ENCODE measurements at regions of chr2 and their contacts with region 1.

Region 1: GRCh38 chr2:220143336-220143735 is 515.9 kb downstream of the SLC4A3 start:
- DNase-seq: peak; percentile 37
- ATAC-seq: peak; percentile 38; the same call in 2 of the 3 replicates
- H3K4me3 ChIP-seq: no peak overlapping the region
- H3K27ac ChIP-seq: no peak overlapping the region
- H3K4me1 ChIP-seq: no peaks in the 10 kb centered on the region
- H3K27me3 ChIP-seq: no peaks in the 10 kb centered on the region; a peak in 1 of 5 replicates
- CTCF ChIP-seq: no peak
- EP300 ChIP-seq: no peak
- POLR2A ChIP-seq: no peak
- RAD21 ChIP-seq: no peak

Region 2: DNA sequence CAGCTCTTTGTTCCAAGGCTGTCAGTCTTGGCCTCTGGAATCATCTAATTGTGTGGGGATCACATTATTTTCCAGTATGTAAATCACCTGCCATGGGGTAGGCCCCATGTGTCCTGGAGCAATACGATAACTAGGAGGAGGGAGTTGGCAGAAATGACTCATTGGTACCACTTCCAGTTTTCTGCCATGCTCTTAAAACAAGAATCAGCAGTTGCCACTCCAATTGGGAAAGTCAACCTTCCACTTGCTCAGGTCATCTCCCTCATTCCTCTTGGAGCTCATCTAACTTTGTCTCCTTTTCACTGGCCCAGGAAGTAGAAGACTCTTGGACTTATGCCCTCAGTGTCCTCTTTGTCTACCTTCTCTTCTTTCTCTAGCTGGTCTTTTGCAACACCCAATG is 28.9 kb before region 1 on chr2:
- CTCF ChIA-PET with region 1: no interaction called
- POLR2A ChIA-PET with region 1: no interaction called
- in situ Hi-C with region 1: no loop called
- intact Hi-C with region 1: loop called (anchors 1 kb)
- DNase-seq: no peak
- ATAC-seq: no peak
- H3K4me3 ChIP-seq: no peak overlapping the region
- H3K27ac ChIP-seq: no peak overlapping the region
- H3K4me1 ChIP-seq: no peaks in the 10 kb centered on the region
- H3K27me3 ChIP-seq: peaks cover 0 to 10% of the 10 kb centered on the region in 2 experiments; a peak in 3 of 5 replicates
- CTCF ChIP-seq: no peak
- EP300 ChIP-seq: no peak
- POLR2A ChIP-seq: no peak
- RAD21 ChIP-seq: no peak

Measured in HepG2 (cell line).